ENCODE measurements at regions of chr2 and their contacts with region 1.

Region 1: DNA sequence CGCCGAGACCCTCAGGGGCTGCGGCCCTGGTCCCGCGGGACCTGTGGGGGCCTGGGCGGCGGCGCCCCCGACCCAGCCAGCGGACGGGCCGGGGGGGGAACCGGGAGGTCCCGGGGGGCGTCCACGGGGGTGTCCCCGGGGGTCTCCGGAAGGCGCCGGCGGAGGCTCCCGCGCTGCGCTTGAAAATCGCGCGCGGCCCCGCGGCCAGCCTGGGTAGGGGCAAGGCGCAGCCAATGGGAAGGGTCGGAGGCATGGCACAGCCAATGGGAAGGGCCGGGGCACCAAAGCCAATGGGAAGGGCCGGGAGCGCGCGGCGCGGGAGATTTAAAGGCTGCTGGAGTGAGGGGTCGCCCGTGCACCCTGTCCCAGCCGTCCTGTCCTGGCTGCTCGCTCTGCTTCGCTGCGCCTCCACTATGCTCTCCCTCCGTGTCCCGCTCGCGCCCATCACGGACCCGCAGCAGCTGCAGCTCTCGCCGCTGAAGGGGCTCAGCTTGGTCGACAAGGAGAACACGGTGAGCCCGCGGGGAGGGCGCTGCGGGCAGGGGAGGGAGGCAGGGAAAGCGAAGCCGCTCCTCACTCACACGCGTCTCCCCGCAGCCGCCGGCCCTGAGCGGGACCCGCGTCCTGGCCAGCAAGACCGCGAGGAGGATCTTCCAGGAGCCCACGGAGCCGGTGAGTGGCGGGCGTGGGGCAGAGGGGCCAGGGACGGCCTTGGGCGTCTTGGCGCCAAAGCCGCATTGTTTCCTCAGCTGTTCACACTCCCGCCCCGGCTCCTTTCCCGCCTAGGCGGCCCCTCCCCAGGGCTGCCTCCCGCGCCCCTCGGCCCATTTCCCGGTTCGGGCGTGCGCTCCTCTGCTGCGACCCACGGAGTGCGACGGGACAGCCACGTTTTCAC is at the start of gene RRM2:
- DNase-seq: peak; percentile 96
- H3K4me3 Mint-ChIP-seq: peak within 1 kb of the TSS; percentile 97
- H3K27ac Mint-ChIP-seq: peak within 1 kb of the TSS; percentile 84
- H3K4me1 Mint-ChIP-seq: peaks cover 19% of the 10 kb centered on the region
- H3K27me3 Mint-ChIP-seq: no peaks in the 10 kb centered on the region
- CTCF ChIP-seq: no peak
- total RNA-seq, gene RRM2: 16.5 and 41.8 TPM in 2 replicates

Region 2: DNA sequence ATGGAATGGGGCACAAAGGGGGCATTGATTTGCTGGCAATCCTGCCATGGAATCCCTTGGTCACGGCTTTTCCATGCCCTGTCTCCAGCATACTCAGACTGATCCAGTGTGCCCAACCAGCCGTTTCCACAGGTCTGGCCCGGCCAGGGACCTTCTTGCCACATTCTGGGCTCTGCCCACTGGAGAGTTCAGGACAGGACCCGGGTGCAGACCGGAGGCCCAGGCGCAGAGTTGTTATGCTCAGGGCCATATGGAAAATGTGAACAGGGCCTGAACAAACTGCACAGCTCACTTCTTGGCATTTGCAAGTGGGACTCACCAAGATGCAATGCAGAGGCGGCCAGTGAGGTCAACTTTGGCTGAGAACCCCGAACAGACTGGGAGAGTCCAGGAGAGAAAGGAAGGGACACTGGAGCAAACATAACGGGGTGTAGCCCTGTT is 931.6 kb before region 1 on chr2:
- CTCF ChIA-PET with region 1: no interaction called
- POLR2A ChIA-PET with region 1: no interaction called
- intact Hi-C with region 1: no loop called
- DNase-seq: peak; percentile 54
- H3K4me3 Mint-ChIP-seq: no peak overlapping the region
- H3K27ac Mint-ChIP-seq: no peak overlapping the region
- H3K4me1 Mint-ChIP-seq: no peaks in the 10 kb centered on the region
- H3K27me3 Mint-ChIP-seq: no peaks in the 10 kb centered on the region
- CTCF ChIP-seq: no peak

Region 3: GRCh38 chr2:9951272-9951972 is 171.2 kb before region 1 on chr2 and contains the start of gene GRHL1:
- CTCF ChIA-PET with region 1: no interaction called
- POLR2A ChIA-PET with region 1: no interaction called
- intact Hi-C with region 1: no loop called
- DNase-seq: peak; percentile 91
- H3K4me3 Mint-ChIP-seq: peak within 1 kb of the TSS; percentile 74
- H3K27ac Mint-ChIP-seq: no peak within 1 kb of the TSS
- H3K4me1 Mint-ChIP-seq: peaks cover 6% of the 10 kb centered on the region
- H3K27me3 Mint-ChIP-seq: no peaks in the 10 kb centered on the region
- CTCF ChIP-seq: no peak
- total RNA-seq, gene GRHL1: 0.96 and 2.0 TPM in 2 replicates

Region 4: DNA sequence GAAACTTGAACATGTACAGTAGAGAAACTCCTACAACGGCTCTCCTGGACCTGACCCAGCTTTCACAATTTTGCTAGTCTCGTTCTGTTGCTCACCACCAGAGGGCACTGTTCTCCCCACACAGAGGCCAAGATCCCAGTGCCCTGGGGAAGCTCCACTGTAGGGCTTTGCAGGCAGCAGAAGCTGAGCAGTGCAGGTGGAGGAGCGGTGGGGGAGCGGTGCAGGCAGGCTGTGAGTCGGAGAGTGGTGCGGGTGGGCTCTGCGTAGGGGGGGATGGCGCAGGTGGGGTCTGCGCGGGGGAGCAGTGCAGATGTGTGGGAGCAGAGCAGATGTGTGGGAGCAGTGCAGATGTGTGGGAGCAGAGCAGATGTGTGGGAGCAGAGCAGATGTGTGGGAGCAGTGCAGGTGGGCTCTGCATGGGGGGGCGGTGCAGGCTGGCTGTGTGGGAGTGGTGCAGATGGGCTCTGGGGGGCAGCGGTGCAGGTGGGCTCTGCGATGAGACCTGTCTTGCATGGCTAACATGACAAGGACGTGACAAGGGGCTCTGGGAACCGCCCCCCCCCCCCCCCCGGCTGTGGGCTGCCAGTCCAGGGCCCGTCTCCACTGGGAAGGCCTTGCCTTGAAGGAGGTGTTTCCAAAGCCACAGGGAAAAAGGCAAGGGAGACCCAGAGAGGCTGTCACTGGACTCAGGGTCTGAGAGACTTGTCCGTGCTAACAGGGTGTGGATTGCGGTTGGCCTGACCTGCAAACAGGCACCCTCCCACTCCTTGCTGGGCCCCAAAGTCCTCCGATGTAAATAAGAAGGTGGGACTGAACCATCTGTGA is 49.8 kb before region 1 on chr2:
- CTCF ChIA-PET with region 1: interaction called, 13 read pairs
- POLR2A ChIA-PET with region 1: interaction called, 10 read pairs
- intact Hi-C with region 1: loop called (anchors 1 kb)
- DNase-seq: peak; percentile 87
- H3K4me3 Mint-ChIP-seq: no peak overlapping the region
- H3K27ac Mint-ChIP-seq: no peak overlapping the region
- H3K4me1 Mint-ChIP-seq: peaks cover 8% of the 10 kb centered on the region
- H3K27me3 Mint-ChIP-seq: peaks cover 46% of the 10 kb centered on the region
- CTCF ChIP-seq: peak; percentile 67

Region 5: GRCh38 chr2:10135296-10136089 is 12.9 kb after region 1 on chr2:
- CTCF ChIA-PET with region 1: interaction called, 30 read pairs
- POLR2A ChIA-PET with region 1: interaction called, 3 read pairs
- intact Hi-C with region 1: no loop called
- DNase-seq: peak; percentile 57
- H3K4me3 Mint-ChIP-seq: no peak overlapping the region
- H3K27ac Mint-ChIP-seq: peak overlapping the region; percentile 66
- H3K4me1 Mint-ChIP-seq: peaks cover 19% of the 10 kb centered on the region
- H3K27me3 Mint-ChIP-seq: no peaks in the 10 kb centered on the region
- CTCF ChIP-seq: no peak

Region 6: DNA sequence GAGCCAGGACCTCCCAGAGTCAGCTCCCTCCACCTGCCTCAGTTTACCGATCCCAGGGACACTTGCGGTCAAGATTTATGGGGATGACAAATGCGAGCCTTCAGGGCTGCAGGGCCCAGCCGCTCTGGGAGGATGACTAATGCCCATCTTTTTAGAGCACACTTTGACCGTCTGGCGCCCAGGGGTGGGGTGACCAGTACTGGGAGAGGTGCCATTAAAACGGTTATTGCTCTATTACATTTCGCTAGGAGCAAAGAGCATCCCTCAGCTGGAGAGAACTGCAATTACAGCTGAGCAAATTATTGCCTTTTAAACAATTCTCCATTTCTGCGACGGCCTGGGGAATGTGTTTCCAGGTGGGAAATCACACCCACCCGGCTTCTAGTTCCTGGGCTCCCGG is 137.5 kb after region 1 on chr2:
- CTCF ChIA-PET with region 1: interaction called, 3 read pairs
- POLR2A ChIA-PET with region 1: no interaction called
- intact Hi-C with region 1: loop called (anchors 2 kb)
- DNase-seq: peak; percentile 91
- H3K4me3 Mint-ChIP-seq: no peak overlapping the region
- H3K27ac Mint-ChIP-seq: no peak overlapping the region
- H3K4me1 Mint-ChIP-seq: no peaks in the 10 kb centered on the region
- H3K27me3 Mint-ChIP-seq: no peaks in the 10 kb centered on the region
- CTCF ChIP-seq: peak; percentile 18

Region 7: DNA sequence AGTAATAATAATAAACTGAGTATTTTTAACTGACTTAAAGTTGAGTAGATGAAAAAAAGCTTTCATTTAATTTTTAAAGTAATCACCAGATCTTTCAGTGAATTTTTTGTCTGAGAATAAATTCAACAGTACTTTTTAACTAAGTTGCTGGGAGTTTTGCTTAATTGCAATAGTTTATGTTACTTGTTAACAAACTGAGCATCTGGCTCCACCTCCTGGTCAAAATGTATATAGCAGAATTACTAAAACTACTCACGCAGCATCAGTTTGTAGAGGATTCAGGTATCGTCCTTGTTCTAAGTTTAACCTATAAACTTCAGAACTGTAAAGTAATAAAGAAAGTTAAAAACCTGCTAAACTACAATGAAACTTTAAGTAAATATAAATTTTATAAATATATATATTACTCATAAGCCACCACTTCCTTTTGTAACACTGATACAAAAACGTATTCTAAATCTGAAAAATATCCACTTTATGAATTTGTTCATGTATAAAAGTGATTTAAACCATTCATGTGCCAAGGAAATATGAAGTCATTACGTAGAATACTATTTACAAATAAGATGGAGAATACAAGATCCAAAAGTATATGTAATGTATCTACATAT is 545.9 kb after region 1 on chr2:
- CTCF ChIA-PET with region 1: no interaction called
- POLR2A ChIA-PET with region 1: no interaction called
- intact Hi-C with region 1: loop called (anchors 2 kb)
- DNase-seq: peak; percentile 69
- H3K4me3 Mint-ChIP-seq: no peak overlapping the region
- H3K27ac Mint-ChIP-seq: no peak overlapping the region
- H3K4me1 Mint-ChIP-seq: no peaks in the 10 kb centered on the region
- H3K27me3 Mint-ChIP-seq: no peaks in the 10 kb centered on the region
- CTCF ChIP-seq: peak; percentile 38

Measured in MCF 10A (cell line).